ENCODE measurements at regions of chr3 and their contacts with region 1.

Region 1: DNA sequence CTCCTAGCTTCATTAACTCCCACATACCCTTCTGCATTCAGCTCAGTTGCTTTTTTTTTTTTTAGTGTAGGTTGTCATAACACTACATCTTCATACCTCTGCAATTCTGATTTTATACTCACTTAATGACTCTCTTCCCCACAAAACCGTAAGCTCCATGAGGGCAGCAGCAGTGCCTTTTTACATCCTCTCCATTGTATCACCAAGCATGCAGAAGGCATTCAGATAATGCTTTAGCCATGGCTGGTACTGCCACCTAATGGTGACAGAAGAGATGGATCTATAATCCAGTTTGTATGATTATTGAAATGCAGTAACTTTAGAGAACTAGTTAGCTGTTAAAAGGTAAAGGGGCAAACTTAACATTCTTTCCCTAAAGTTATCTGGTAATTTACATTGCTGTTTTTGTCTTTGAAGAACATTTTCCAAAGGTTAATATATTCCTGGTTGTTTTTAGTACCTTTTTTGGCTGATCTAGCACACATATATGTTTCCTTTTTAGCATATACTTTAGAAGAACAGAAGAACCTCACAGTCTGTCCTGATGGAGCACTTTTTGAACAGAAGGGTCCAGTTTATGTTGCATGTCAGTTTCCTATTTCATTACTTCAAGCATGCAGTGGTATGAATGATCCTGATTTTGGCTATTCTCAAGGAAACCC is 36.8 kb downstream of the ATP1B3 start:
- DNase-seq: peak; percentile 53 to 68 (median 61)
- H3K4me3 ChIP-seq: no peak overlapping the region
- H3K4me3 Mint-ChIP-seq: no peak overlapping the region
- H3K27ac ChIP-seq: no peak overlapping the region
- H3K27ac Mint-ChIP-seq: peak overlapping the region in 1 of 7 donors; percentile 67
- H3K4me1 ChIP-seq: no peaks in the 10 kb centered on the region
- H3K4me1 Mint-ChIP-seq: peaks cover 2% of the 10 kb centered on the region
- H3K27me3 ChIP-seq: no peaks in the 10 kb centered on the region
- H3K27me3 Mint-ChIP-seq: no peaks in the 10 kb centered on the region
- CTCF ChIP-seq: peak; percentile 83

Region 2: GRCh38 chr3:141575879-141576743 is 337.2 kb before region 1 on chr3:
- intact Hi-C with region 1: loop called in 1 of 2 experiments (anchors 10 kb)
- DNase-seq: peak in 1 of 3 donors; percentile 13
- H3K4me3 ChIP-seq: no peak overlapping the region
- H3K4me3 Mint-ChIP-seq: no peak overlapping the region
- H3K27ac ChIP-seq: no peak overlapping the region
- H3K27ac Mint-ChIP-seq: peak overlapping the region in 4 of 7 donors; percentile 45 to 69 (median 54)
- H3K4me1 ChIP-seq: no peaks in the 10 kb centered on the region
- H3K4me1 Mint-ChIP-seq: peaks cover 4% of the 10 kb centered on the region
- H3K27me3 ChIP-seq: no peaks in the 10 kb centered on the region
- H3K27me3 Mint-ChIP-seq: no peaks in the 10 kb centered on the region
- CTCF ChIP-seq: peak; percentile 66

Region 3: DNA sequence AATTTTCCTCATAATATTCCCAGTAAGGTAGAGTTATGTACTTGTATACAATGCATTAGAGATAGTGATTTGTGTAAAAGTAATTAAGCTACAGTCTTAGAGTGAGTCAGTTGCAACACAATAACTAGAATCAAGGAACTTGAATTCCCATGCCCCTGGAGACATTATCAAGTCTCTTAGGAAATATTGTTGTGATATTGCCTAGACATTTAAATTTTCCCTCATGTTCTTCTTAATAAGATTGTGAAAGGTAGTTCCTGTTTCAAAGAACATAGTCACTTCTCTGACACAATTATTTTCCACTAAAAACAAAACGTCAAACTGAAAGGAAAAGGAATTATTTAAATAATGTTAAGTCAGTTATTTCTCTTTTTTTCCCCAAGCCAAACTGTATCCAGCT is 49.8 kb before region 1 on chr3:
- intact Hi-C with region 1: no loop called
- DNase-seq: peak; percentile 83 to 98 (median 94)
- H3K4me3 ChIP-seq: peak overlapping the region; percentile 16 to 60 (median 29)
- H3K4me3 Mint-ChIP-seq: peak overlapping the region; percentile 65 to 77
- H3K27ac ChIP-seq: peak overlapping the region; percentile 88 to 91
- H3K27ac Mint-ChIP-seq: peak overlapping the region; percentile 97 to 100 (median 99)
- H3K4me1 ChIP-seq: peaks cover 22 to 25% of the 10 kb centered on the region in 2 donors
- H3K4me1 Mint-ChIP-seq: peaks cover 40% of the 10 kb centered on the region
- H3K27me3 ChIP-seq: no peaks in the 10 kb centered on the region
- H3K27me3 Mint-ChIP-seq: peaks cover 0 to 4% (median 2%) of the 10 kb centered on the region in 3 donors
- CTCF ChIP-seq: no peak